Posterior vena cava (tissue), 2 donors: ENCODE measurements at regions of chr1 and their contacts with region 1.

Region 1: DNA sequence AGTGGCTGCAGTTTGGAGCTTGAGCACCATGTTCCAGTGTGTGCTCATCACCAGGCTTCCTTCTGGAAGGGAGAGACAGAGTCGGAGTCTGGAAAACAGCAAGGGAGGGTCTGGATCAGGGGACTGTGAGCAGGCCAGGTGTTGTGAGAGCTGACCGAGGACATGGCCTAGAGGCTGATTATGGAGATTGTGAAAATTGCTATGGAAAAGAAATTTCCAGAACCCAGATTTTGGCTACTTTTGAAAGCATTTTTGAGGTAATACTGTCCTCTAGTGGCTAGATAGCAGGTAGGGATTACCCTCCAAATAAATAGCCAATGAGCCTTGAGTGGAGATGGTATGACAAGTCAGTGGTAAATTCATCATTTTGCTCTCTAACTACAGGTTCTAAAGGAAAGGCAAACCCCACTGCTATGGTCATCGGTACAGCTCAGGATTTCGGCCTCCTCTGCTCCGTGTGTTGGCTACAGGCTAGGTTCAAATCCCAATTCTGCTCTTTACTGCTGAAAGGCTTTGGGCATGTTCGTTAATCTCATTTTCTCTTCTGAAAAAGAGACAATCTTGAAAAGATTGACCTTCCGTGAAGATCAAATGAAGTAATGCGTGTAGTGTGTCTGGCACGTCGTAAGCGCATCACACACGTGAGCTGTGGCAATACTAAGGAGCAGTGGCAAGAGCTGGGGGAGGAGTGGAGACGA is 1.0 kb upstream of the HAO2 start:
- DNase-seq: no peak

Region 2: GRCh38 chr1:118151312-118151937 is 1216.2 kb before region 1 on chr1:
- intact Hi-C with region 1: loop called in 1 of 2 experiments (anchors 10 kb)
- DNase-seq: peak; percentile 74

Region 3: GRCh38 chr1:118821801-118822200 is 545.8 kb before region 1 on chr1:
- intact Hi-C with region 1: loop called in 1 of 2 experiments (anchors 5 kb)
- DNase-seq: no peak

Region 4: GRCh38 chr1:119275145-119276134 is 92.1 kb before region 1 on chr1:
- intact Hi-C with region 1: loop called (anchors 10 kb)
- DNase-seq: no peak